ENCODE measurements at regions of chr6 and their contacts with region 1.

Region 1: DNA sequence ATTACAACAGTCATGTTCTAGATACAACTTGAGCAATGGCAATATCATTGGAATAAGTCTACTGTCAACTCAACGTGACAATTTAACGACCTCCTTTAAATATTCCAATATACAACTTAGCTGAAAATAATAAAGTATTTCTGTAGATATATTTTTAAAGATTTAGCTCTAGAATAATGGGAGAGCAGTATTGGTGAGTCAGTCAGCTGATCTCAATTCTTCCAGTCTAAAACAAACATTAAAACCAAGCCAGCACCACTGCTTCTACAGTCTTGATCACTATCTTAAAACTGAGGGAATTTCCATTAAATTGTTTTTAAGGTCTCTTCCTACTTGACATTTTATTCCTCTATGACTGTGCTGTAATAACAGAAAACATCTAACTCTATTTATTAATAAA is 38.2 kb downstream of the NOL7 start:
- DNase-seq: no peak
- H3K4me3 ChIP-seq: no peak overlapping the region
- H3K4me3 Mint-ChIP-seq: no peak overlapping the region
- H3K27ac ChIP-seq: no peak overlapping the region
- H3K27ac Mint-ChIP-seq: no peak overlapping the region
- H3K4me1 ChIP-seq: no peaks in the 10 kb centered on the region
- H3K4me1 Mint-ChIP-seq: peaks cover 14 to 27% (median 23%) of the 10 kb centered on the region in 4 donors
- H3K27me3 ChIP-seq: no peaks in the 10 kb centered on the region
- H3K27me3 Mint-ChIP-seq: no peaks in the 10 kb centered on the region

Region 2: DNA sequence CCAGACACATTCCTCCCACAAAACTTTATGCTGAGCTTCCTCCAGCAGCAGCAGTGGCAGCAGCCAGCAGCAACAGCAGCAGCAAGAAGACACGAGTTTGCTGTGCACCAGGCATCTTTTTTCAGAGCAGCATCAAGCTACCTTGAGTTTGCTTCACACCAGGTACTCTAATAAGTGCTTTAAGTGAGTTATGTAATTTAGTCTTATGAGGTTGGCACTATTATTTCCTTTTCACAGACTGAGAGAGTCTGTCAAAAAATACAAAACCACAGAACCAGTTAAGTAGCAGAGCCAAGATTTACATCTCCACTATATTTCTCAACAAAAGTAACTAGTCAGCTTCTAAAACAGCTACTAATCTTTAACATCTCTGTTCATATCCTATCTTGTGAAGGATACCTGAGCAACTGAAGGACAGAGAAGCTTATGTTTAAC is 34.6 kb after region 1 on chr6:
- CTCF ChIA-PET with region 1: no interaction called
- POLR2A ChIA-PET with region 1: interaction called, 4 read pairs
- intact Hi-C with region 1: loop called (anchors 5 kb)
- DNase-seq: peak; percentile 48 to 68 (median 55)
- H3K4me3 ChIP-seq: no peak overlapping the region
- H3K4me3 Mint-ChIP-seq: peak overlapping the region; percentile 57 to 89 (median 80)
- H3K27ac ChIP-seq: peak overlapping the region; percentile 52
- H3K27ac Mint-ChIP-seq: peak overlapping the region; percentile 91 to 96 (median 95)
- H3K4me1 ChIP-seq: peaks cover 84% of the 10 kb centered on the region
- H3K4me1 Mint-ChIP-seq: peaks cover 52 to 71% (median 61%) of the 10 kb centered on the region in 4 donors
- H3K27me3 ChIP-seq: no peaks in the 10 kb centered on the region
- H3K27me3 Mint-ChIP-seq: no peaks in the 10 kb centered on the region

Region 3: DNA sequence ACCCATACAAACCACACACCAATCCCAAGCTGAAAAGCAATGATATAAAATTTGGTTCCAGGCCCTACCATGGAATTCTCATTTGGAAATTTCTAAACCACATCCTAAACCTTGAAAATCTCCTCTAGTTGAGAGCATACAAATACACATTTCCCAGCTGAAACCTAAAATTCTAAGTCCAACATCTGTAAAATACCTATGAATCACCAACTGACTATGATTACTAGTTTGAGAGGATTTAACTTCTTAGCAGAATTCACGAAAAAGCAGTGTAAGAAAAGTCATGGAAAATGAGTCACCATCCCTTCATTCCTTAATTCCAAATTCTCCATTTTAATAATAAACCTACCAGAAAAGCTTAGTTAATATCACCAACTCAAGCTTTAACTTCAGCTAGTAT is 42.9 kb after region 1 on chr6:
- CTCF ChIA-PET with region 1: no interaction called
- POLR2A ChIA-PET with region 1: interaction called, 5 read pairs
- intact Hi-C with region 1: loop called (anchors 5 kb)
- DNase-seq: no peak
- H3K4me3 ChIP-seq: no peak overlapping the region
- H3K4me3 Mint-ChIP-seq: peak overlapping the region in 4 of 8 donors; percentile 15 to 67 (median 38)
- H3K27ac ChIP-seq: peak overlapping the region; percentile 42
- H3K27ac Mint-ChIP-seq: peak overlapping the region; percentile 39 to 94 (median 86)
- H3K4me1 ChIP-seq: peaks cover 86% of the 10 kb centered on the region
- H3K4me1 Mint-ChIP-seq: peaks cover 53 to 78% (median 64%) of the 10 kb centered on the region in 4 donors
- H3K27me3 ChIP-seq: no peaks in the 10 kb centered on the region
- H3K27me3 Mint-ChIP-seq: no peaks in the 10 kb centered on the region

Measured in CD4-positive, alpha-beta memory T cell (primary cell).